A673 (cell line): ENCODE measurements at regions of chr2 and their contacts with region 1.

Region 1: GRCh38 chr2:55111570-55112228 is 61.4 kb upstream of the RTN4 start:
- DNase-seq: peak; percentile 95
- H3K4me3 ChIP-seq: no peak overlapping the region
- H3K27ac ChIP-seq: peak overlapping the region; percentile 84
- H3K4me1 ChIP-seq: peaks cover 32% of the 10 kb centered on the region
- H3K27me3 ChIP-seq: no peaks in the 10 kb centered on the region
- CTCF ChIP-seq: no peak

Region 2: GRCh38 chr2:54999182-54999581 is 112.5 kb before region 1 on chr2:
- CTCF ChIA-PET with region 1: no interaction called
- POLR2A ChIA-PET with region 1: no interaction called
- intact Hi-C with region 1: no loop called
- DNase-seq: peak; percentile 62
- H3K4me3 ChIP-seq: no peak overlapping the region
- H3K27ac ChIP-seq: peak overlapping the region; percentile 19
- H3K4me1 ChIP-seq: peaks cover 53% of the 10 kb centered on the region
- H3K27me3 ChIP-seq: no peaks in the 10 kb centered on the region
- CTCF ChIP-seq: no peak

Region 3: GRCh38 chr2:55395724-55396605 is 284.3 kb after region 1 on chr2:
- CTCF ChIA-PET with region 1: no interaction called
- POLR2A ChIA-PET with region 1: interaction called, 16 read pairs
- intact Hi-C with region 1: no loop called
- DNase-seq: no peak
- H3K4me3 ChIP-seq: no peak overlapping the region
- H3K27ac ChIP-seq: no peak overlapping the region
- H3K4me1 ChIP-seq: no peaks in the 10 kb centered on the region
- H3K27me3 ChIP-seq: no peaks in the 10 kb centered on the region
- CTCF ChIP-seq: no peak